Naive thymus-derived CD8-positive, alpha-beta T cell (primary cell): ENCODE measurements at regions of chr19 and their contacts with region 1.

Region 1: GRCh38 chr19:4115050-4115817 is 8.7 kb downstream of the MAP2K2 start:
- DNase-seq: peak; percentile 48 to 89 (median 76)
- ATAC-seq: peak; percentile 99 to 100
- H3K4me3 Mint-ChIP-seq: peak overlapping the region; percentile 26 to 83 (median 68)
- H3K27ac Mint-ChIP-seq: peak overlapping the region; percentile 68 to 95 (median 88)
- H3K4me1 Mint-ChIP-seq: peaks cover 14 to 72% (median 47%) of the 10 kb centered on the region in 4 donors
- H3K27me3 Mint-ChIP-seq: no peaks in the 10 kb centered on the region

Region 2: DNA sequence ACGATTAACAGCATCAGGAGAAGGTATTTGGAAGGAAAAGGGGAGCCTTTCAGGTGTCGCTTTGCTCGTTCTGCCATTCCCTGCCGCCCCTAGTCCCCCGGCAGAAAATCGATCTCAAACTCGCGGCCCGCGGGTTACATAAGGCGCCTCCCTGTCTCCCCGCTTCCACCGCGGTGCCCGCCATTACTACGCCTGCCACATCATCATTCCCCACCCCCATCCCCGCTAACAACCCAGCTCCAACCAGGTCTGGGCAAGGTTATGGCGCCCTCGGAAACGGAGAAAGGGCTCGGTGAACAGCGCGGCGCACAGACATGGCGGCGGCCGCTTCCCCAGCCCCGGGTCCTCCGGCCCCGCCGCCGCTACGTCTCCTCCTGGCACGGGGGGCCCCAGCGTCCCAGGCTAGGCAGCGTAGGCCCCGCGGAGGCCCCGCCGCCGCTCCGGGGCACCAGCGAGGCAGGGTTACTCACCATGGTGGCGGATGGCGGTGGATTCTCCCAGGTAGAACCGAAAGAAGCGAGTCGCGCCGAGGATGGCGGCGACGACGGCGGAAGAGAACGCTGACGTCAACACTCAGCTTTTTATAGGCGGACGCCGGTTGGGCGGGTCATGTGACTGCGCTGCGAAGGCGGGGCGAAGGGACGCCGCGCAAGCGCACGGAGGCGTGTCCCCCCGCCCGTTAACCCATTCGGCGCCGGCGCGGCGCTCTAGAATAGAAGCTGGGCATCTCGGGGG is 130.2 kb before region 1 on chr19 and contains the start of gene EEF2:
- POLR2A ChIA-PET with region 1: interaction called, 17 read pairs
- DNase-seq: peak; percentile 84 to 97 (median 92)
- ATAC-seq: peak; percentile 57 to 64
- H3K4me3 Mint-ChIP-seq: peak within 1 kb of the TSS; percentile 92 to 99 (median 97)
- H3K27ac Mint-ChIP-seq: peak within 1 kb of the TSS; percentile 92 to 98 (median 97)
- H3K4me1 Mint-ChIP-seq: peaks cover 14 to 67% (median 49%) of the 10 kb centered on the region in 4 donors
- H3K27me3 Mint-ChIP-seq: no peaks in the 10 kb centered on the region
- polyA plus RNA-seq, gene EEF2: 546 to 682 (median 600) TPM

Region 3: DNA sequence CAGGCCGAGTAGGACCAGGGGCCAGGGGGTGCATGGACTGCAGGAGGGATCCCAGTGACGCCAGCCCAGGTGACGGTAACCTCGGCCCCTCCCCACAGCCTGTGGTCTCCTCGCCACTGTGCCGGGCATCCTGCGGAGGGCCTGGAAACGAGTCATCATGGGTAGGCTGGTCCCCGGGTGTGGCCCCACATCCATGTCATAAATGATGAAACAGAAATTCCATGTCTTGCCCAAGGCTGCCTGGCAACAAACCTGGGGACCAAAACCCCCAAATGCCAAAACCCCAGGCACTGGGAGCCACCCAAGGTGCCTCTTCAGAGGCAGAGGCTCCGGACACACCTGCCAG is 12.2 kb before region 1 on chr19:
- POLR2A ChIA-PET with region 1: interaction called, 35 read pairs
- DNase-seq: no peak
- ATAC-seq: no peak
- H3K4me3 Mint-ChIP-seq: no peak overlapping the region
- H3K27ac Mint-ChIP-seq: peak overlapping the region in 1 of 10 donors; percentile 95
- H3K4me1 Mint-ChIP-seq: peaks cover 21 to 42% (median 36%) of the 10 kb centered on the region in 4 donors
- H3K27me3 Mint-ChIP-seq: no peaks in the 10 kb centered on the region